Calu3 (cell line): ENCODE measurements at regions of chr18 and their contacts with region 1.

Region 1: GRCh38 chr18:33291539-33291938 is 149.0 kb downstream of the CCDC178 start:
- DNase-seq: no peak
- H3K4me3 Mint-ChIP-seq: no peak overlapping the region
- H3K27ac Mint-ChIP-seq: no peak overlapping the region
- H3K4me1 Mint-ChIP-seq: no peaks in the 10 kb centered on the region
- H3K27me3 Mint-ChIP-seq: no peaks in the 10 kb centered on the region
- CTCF ChIP-seq: no peak

Region 2: GRCh38 chr18:33210575-33211189 is 80.9 kb before region 1 on chr18:
- CTCF ChIA-PET with region 1: no interaction called
- intact Hi-C with region 1: no loop called
- DNase-seq: peak; percentile 13
- H3K4me3 Mint-ChIP-seq: no peak overlapping the region
- H3K27ac Mint-ChIP-seq: no peak overlapping the region
- H3K4me1 Mint-ChIP-seq: no peaks in the 10 kb centered on the region
- H3K27me3 Mint-ChIP-seq: no peaks in the 10 kb centered on the region
- CTCF ChIP-seq: peak; percentile 42

Region 3: GRCh38 chr18:33269223-33269622 is 22.3 kb before region 1 on chr18:
- CTCF ChIA-PET with region 1: no interaction called
- intact Hi-C with region 1: loop called (anchors 2 kb)
- DNase-seq: no peak
- H3K4me3 Mint-ChIP-seq: no peak overlapping the region
- H3K27ac Mint-ChIP-seq: no peak overlapping the region
- H3K4me1 Mint-ChIP-seq: no peaks in the 10 kb centered on the region
- H3K27me3 Mint-ChIP-seq: no peaks in the 10 kb centered on the region
- CTCF ChIP-seq: no peak